ENCODE measurements at regions of chr1 and their contacts with region 1.

Region 1: GRCh38 chr1:201511941-201512539 is 5.1 kb upstream of the CSRP1 start:
- DNase-seq: no peak
- ATAC-seq: peak; percentile 65; the same call in 1 of the 2 replicates
- H3K4me3 ChIP-seq: no peak overlapping the region
- H3K27ac ChIP-seq: peak overlapping the region; percentile 36; the same call in 1 of the 2 replicates
- H3K4me1 ChIP-seq: peaks cover 13% of the 10 kb centered on the region
- H3K27me3 ChIP-seq: no peaks in the 10 kb centered on the region
- CTCF ChIP-seq: no peak

Region 2: DNA sequence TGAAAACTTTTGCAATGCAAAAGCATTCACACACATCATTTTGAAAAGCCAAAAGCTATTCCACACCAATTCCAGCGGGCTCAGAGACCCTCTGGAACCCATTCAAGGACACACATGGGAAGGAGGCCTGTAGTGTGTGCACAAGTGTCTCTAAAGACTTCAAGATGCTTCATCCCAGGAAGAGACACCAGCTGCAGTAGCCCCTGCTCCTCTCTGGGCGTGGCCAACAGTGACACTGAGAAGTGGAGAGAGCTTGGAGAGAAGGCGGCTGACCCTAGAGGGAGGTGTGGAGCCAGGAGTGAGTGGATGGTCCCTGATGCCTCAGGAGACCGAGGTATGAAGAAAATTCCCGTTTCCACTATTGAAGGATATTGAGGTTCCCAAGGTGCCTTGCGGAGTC is 75.6 kb before region 1 on chr1:
- CTCF ChIA-PET with region 1: interaction called, 23 read pairs
- POLR2A ChIA-PET with region 1: no interaction called
- in situ Hi-C with region 1: no loop called
- intact Hi-C with region 1: no loop called
- DNase-seq: no peak
- ATAC-seq: peak; percentile 89
- H3K4me3 ChIP-seq: no peak overlapping the region
- H3K27ac ChIP-seq: no peak overlapping the region
- H3K4me1 ChIP-seq: no peaks in the 10 kb centered on the region
- H3K27me3 ChIP-seq: no peaks in the 10 kb centered on the region
- CTCF ChIP-seq: no peak

Region 3: GRCh38 chr1:201447911-201448871 is 63.8 kb before region 1 on chr1:
- CTCF ChIA-PET with region 1: interaction called, 21 read pairs
- POLR2A ChIA-PET with region 1: no interaction called
- in situ Hi-C with region 1: no loop called
- intact Hi-C with region 1: loop called (anchors 1 kb)
- DNase-seq: no peak
- ATAC-seq: peak; percentile 98
- H3K4me3 ChIP-seq: no peak overlapping the region
- H3K27ac ChIP-seq: no peak overlapping the region
- H3K4me1 ChIP-seq: peaks cover 6% of the 10 kb centered on the region
- H3K27me3 ChIP-seq: no peaks in the 10 kb centered on the region
- CTCF ChIP-seq: peak; percentile 95

Region 4: GRCh38 chr1:201481761-201482493 is 30.1 kb before region 1 on chr1:
- CTCF ChIA-PET with region 1: interaction called, 110 read pairs
- POLR2A ChIA-PET with region 1: interaction called, 14 read pairs
- in situ Hi-C with region 1: no loop called
- intact Hi-C with region 1: loop called (anchors 1 kb)
- DNase-seq: no peak
- ATAC-seq: peak; percentile 93
- H3K4me3 ChIP-seq: peak overlapping the region in 1 of 2 experiments; percentile 53; a peak in 2 of 4 replicates
- H3K27ac ChIP-seq: peak overlapping the region; percentile 70; the same call in 1 of the 2 replicates
- H3K4me1 ChIP-seq: peaks cover 14% of the 10 kb centered on the region
- H3K27me3 ChIP-seq: no peaks in the 10 kb centered on the region
- CTCF ChIP-seq: peak; percentile 94

Region 5: GRCh38 chr1:201488817-201489589 is 23.0 kb before region 1 on chr1:
- CTCF ChIA-PET with region 1: interaction called, 25 read pairs
- POLR2A ChIA-PET with region 1: no interaction called
- in situ Hi-C with region 1: no loop called
- intact Hi-C with region 1: no loop called
- DNase-seq: no peak
- ATAC-seq: peak; percentile 49; the same call in 1 of the 2 replicates
- H3K4me3 ChIP-seq: no peak overlapping the region
- H3K27ac ChIP-seq: no peak overlapping the region
- H3K4me1 ChIP-seq: no peaks in the 10 kb centered on the region
- H3K27me3 ChIP-seq: no peaks in the 10 kb centered on the region
- CTCF ChIP-seq: no peak

Region 6: DNA sequence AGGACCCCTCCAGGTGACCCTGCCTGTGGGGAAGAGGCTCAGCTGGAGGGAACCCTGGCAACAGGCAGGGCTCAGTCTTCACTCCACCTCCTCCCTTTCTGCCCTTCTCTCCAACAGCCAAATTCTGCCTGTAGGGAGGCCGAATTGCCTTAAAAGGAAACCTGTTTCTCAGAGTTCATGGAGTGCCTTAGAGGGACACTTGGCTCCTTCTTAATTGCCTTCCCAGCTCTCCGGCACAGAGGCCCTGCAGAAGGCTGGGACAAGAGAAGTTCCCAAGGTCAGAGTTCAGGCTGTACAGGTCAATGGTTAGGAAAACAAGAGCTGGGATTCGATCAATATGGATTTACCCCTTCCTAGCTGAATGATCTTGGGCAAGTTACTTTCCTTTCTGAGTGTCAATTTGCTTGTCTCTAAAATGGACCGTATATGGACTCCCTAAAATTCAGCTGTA is 11.3 kb before region 1 on chr1:
- CTCF ChIA-PET with region 1: interaction called, 30 read pairs
- POLR2A ChIA-PET with region 1: interaction called, 8 read pairs
- in situ Hi-C with region 1: no loop called
- intact Hi-C with region 1: no loop called
- DNase-seq: no peak
- ATAC-seq: 0 out of 2 replicates have a peak, but pooled peaks have one; percentile 6
- H3K4me3 ChIP-seq: no peak overlapping the region
- H3K27ac ChIP-seq: peak overlapping the region; percentile 46; the same call in 1 of the 2 replicates
- H3K4me1 ChIP-seq: peaks cover 39% of the 10 kb centered on the region
- H3K27me3 ChIP-seq: no peaks in the 10 kb centered on the region
- CTCF ChIP-seq: no peak

Region 7: DNA sequence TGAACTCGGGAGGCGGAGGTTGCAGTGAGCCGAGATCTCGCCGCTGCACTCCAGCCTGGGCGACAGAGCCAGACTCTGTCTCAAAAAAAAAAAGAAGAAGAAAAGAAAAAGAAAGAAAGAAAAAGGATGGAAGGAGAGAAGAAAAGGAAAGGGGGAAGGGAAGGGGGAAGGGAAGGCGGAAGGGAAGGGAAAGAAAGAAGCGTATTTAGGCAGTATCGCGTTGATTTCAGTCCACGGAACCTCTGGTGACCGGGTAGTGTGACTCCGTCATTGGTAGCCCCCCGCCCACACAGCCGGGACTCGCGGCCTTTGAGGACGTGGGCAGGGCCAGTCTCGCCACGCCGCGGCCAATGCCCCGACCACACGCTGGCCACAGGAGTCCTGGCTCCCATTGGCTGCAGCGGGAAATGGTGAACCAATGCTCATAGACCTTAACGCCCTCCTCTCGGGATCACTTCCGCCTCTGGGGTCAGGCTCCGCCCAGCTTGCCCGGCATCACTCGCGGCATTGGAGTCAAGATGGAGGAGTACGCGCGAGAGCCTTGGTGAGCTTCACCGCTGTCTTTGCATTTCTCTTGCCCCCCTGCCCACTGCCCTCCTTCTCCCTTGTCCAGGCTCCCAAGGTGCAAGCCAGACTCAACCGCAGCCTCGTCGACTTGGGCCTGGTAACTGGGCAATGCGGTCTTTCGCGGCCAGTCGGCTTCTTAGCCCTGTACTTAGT is 443.1 kb after region 1 on chr1 and contains the start of gene TIMM17A:
- CTCF ChIA-PET with region 1: no interaction called
- POLR2A ChIA-PET with region 1: no interaction called
- in situ Hi-C with region 1: no loop called
- intact Hi-C with region 1: no loop called
- DNase-seq: peak; percentile 92
- ATAC-seq: peak; percentile 100
- H3K4me3 ChIP-seq: peak within 1 kb of the TSS; percentile 97 to 99
- H3K27ac ChIP-seq: peak within 1 kb of the TSS; percentile 97
- H3K4me1 ChIP-seq: peaks cover 4% of the 10 kb centered on the region
- H3K27me3 ChIP-seq: no peaks in the 10 kb centered on the region
- CTCF ChIP-seq: no peak
- total RNA-seq, gene TIMM17A: 118 TPM